ENCODE measurements at regions of chr19 and their contacts with region 1.

Region 1: GRCh38 chr19:50896591-50897190 is 14.5 kb downstream of the KLK4 start:
- DNase-seq: peak; percentile 100
- ATAC-seq: peak; percentile 96
- H3K4me3 ChIP-seq: peak overlapping the region; percentile 22; the same call in 1 of the 2 replicates
- H3K27ac ChIP-seq: peak overlapping the region; percentile 76
- H3K4me1 ChIP-seq: peaks cover 23% of the 10 kb centered on the region
- H3K27me3 ChIP-seq: no peaks in the 10 kb centered on the region
- CTCF ChIP-seq: no peak
- EP300 ChIP-seq: peak; percentile 98 to 100
- POLR2A ChIP-seq: peak; percentile 51
- RAD21 ChIP-seq: no peak

Region 2: DNA sequence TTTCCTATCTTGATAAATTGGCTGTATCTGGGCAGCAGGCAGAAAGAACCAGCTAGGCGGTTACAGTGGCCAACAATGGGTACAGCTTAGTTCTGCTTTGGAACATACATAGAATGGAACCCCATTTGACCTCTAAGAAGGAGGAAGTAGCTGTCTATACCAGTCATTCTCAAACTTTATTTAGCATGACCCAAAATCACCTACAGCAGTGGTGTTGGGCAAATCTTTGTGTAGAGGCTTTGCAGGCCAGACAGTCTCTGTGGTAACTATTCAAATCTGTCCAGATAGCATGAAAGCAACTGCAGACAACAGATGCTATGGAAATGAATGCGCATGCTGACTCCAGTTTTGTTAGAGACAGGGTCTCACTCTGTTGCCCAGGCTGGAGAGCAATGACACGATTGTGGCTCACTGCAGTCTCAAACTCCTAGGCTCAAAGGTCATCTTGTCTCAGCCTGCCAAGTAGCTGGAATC is 555.6 kb before region 1 on chr19:
- CTCF ChIA-PET with region 1: no interaction called
- POLR2A ChIA-PET with region 1: no interaction called
- RAD21 ChIA-PET with region 1: no interaction called
- SMC1A ChIA-PET with region 1: no interaction called
- in situ Hi-C with region 1: no loop called
- intact Hi-C with region 1: no loop called
- DNase-seq: peak; percentile 96
- ATAC-seq: peak; percentile 78
- H3K4me3 ChIP-seq: peak overlapping the region; percentile 90
- H3K27ac ChIP-seq: peak overlapping the region; percentile 95
- H3K4me1 ChIP-seq: peaks cover 20% of the 10 kb centered on the region
- H3K27me3 ChIP-seq: no peaks in the 10 kb centered on the region
- CTCF ChIP-seq: no peak
- EP300 ChIP-seq: peak; percentile 39 to 78; a peak in 3 of 4 replicates
- POLR2A ChIP-seq: peak; percentile 51
- RAD21 ChIP-seq: no peak

Region 3: DNA sequence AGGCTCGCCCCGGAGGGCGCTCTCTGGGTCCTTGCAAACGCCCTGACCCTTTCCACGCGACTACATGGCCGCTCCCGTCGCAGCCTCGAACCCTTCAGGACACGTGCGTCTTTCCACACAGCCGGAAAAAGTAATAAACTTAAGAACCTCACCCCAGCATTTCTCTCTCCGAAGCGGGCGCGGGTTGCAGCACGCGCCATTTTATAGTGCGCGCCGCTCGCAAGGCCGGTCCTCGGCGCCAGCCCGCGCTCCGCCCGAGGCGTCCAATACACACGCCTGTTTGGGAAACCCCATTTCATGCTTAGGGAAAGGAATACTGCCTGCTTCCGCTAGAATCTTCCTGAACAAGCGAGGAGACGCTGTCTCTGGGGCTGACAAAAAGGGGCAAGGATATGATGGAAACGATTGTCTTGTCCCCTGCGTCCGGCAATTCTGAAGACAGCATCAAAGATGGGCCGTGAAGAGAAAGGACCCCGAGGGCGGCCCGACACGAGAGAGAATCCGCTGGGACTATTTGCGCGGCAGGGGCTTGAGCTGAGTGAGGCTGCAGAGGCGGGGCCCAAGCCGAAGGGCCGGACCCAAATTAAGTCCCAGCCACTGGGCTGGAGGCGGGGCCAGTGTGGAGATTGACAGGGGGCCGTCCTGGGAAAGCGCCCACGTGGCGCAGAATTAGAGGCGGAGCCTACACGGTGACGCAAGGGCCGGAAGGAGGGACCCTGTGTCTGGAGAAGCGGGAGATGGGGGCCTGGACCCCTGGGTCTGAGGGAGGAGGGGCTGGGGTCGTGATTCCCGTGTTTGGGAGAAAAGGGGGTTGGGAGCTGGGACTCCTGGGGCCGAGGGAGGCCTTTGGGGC is 92.0 kb before region 1 on chr19:
- CTCF ChIA-PET with region 1: interaction called, 4 read pairs
- POLR2A ChIA-PET with region 1: no interaction called
- RAD21 ChIA-PET with region 1: no interaction called
- SMC1A ChIA-PET with region 1: no interaction called
- in situ Hi-C with region 1: no loop called
- intact Hi-C with region 1: loop called (anchors 2 kb)
- DNase-seq: peak; percentile 91
- ATAC-seq: peak; percentile 95
- H3K4me3 ChIP-seq: peak overlapping the region; percentile 98
- H3K27ac ChIP-seq: peak overlapping the region; percentile 97
- H3K4me1 ChIP-seq: peaks cover 7% of the 10 kb centered on the region
- H3K27me3 ChIP-seq: no peaks in the 10 kb centered on the region
- CTCF ChIP-seq: no peak
- EP300 ChIP-seq: no peak
- POLR2A ChIP-seq: peak; percentile 97
- RAD21 ChIP-seq: 0 out of 2 replicates have a peak, but pooled peaks have one; percentile 8

Region 4: DNA sequence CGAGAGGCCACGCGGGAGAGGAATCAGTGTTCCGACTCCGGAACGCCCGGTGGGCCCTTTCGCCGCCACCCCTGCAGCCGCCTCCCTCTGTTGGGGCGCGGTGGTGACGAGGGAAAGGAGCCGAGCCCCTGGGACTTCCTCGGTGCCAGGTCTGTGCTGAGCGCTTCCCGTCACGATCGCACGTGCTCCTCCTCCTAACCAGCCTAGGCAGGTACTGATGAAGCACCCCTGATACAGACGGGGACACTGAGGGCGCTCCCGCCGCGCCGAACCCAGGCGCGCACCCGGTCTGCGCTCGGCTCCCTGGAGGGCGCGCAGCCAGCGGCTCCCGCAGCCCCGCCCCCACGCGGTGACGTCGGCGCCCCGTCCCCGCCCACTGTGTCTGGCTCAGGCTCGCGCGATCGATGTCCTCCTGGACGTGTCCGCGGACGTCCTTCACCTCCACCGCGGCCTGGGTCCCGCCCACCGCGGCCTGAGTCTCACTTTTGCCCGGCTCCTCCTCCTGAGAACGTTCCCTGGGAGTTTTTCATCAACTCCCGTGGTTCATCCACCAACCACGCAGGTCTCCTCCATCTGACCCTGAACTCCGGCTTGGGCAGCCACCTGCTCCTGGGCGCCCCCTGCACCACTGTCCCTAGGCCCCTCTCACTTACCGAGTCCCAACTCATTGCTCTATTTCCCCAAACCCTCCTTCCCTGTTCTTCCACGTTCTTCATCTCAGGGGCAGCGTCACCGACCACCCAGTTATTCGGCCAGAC is 60.7 kb before region 1 on chr19:
- CTCF ChIA-PET with region 1: interaction called, 6 read pairs
- POLR2A ChIA-PET with region 1: interaction called, 4 read pairs
- RAD21 ChIA-PET with region 1: no interaction called
- SMC1A ChIA-PET with region 1: interaction called, 4 read pairs
- in situ Hi-C with region 1: no loop called
- intact Hi-C with region 1: loop called (anchors 5 kb)
- DNase-seq: peak; percentile 26
- ATAC-seq: peak; percentile 96
- H3K4me3 ChIP-seq: peak overlapping the region; percentile 71
- H3K27ac ChIP-seq: no peak overlapping the region
- H3K4me1 ChIP-seq: peaks cover 5% of the 10 kb centered on the region; the same call in 1 of the 2 replicates
- H3K27me3 ChIP-seq: no peaks in the 10 kb centered on the region
- CTCF ChIP-seq: no peak
- EP300 ChIP-seq: no peak
- POLR2A ChIP-seq: peak; percentile 89
- RAD21 ChIP-seq: no peak

Region 5: GRCh38 chr19:50909240-50910070 is 12.8 kb after region 1 on chr19:
- CTCF ChIA-PET with region 1: interaction called, 14 read pairs
- POLR2A ChIA-PET with region 1: no interaction called
- RAD21 ChIA-PET with region 1: no interaction called
- SMC1A ChIA-PET with region 1: interaction called, 3 read pairs
- in situ Hi-C with region 1: no loop called
- intact Hi-C with region 1: no loop called
- DNase-seq: no peak
- ATAC-seq: peak; percentile 69
- H3K4me3 ChIP-seq: peak overlapping the region; percentile 47; the same call in 1 of the 2 replicates
- H3K27ac ChIP-seq: no peak overlapping the region
- H3K4me1 ChIP-seq: no peaks in the 10 kb centered on the region
- H3K27me3 ChIP-seq: peaks cover 4 to 9% of the 10 kb centered on the region in 2 experiments; a peak in 3 of 4 replicates
- CTCF ChIP-seq: no peak
- EP300 ChIP-seq: no peak
- POLR2A ChIP-seq: no peak
- RAD21 ChIP-seq: no peak

Measured in GM12878 (cell line).